Left cardiac atrium (tissue), 4 donors: ENCODE measurements at regions of chr15 and their contacts with region 1.

Region 1: GRCh38 chr15:100341662-100342560 is at the start of gene ADAMTS17:
- DNase-seq: peak; percentile 98
- ATAC-seq: peak; percentile 99
- total RNA-seq, gene ADAMTS17: 3.2 to 6.3 TPM

Region 2: GRCh38 chr15:99826157-99826780 is 515.6 kb before region 1 on chr15:
- intact Hi-C with region 1: no loop called
- DNase-seq: no peak
- ATAC-seq: no peak

Region 3: DNA sequence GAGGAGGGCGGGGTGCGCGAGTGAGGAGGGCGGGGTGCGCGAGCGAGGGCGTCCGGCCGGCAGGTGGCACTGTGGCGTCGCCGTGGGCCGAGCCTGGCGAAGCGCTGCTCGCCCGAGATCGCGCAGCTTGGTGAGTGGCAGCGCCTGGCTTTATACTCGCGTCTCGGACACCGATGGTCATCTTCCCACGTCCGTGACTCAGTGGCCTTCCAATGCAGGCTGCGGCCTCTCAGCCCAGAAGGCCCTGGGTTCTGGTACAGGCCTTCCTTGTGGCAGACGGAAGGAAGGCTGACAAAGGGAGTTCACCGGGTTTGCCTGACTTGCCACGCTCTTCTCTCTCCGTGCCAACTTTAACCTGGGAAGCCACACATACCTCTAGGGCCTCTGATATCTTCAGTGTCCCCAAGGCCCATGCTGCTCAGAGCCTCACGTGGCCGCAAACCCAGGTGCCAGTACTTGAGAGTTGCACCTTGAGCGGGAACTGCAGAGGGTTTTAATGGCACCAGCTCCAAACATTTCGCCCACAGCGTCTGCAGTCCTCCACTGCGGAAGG is 413.4 kb before region 1 on chr15:
- intact Hi-C with region 1: loop called in 1 of 2 experiments (anchors 2 kb)
- DNase-seq: peak; percentile 76
- ATAC-seq: peak; percentile 93

Region 4: DNA sequence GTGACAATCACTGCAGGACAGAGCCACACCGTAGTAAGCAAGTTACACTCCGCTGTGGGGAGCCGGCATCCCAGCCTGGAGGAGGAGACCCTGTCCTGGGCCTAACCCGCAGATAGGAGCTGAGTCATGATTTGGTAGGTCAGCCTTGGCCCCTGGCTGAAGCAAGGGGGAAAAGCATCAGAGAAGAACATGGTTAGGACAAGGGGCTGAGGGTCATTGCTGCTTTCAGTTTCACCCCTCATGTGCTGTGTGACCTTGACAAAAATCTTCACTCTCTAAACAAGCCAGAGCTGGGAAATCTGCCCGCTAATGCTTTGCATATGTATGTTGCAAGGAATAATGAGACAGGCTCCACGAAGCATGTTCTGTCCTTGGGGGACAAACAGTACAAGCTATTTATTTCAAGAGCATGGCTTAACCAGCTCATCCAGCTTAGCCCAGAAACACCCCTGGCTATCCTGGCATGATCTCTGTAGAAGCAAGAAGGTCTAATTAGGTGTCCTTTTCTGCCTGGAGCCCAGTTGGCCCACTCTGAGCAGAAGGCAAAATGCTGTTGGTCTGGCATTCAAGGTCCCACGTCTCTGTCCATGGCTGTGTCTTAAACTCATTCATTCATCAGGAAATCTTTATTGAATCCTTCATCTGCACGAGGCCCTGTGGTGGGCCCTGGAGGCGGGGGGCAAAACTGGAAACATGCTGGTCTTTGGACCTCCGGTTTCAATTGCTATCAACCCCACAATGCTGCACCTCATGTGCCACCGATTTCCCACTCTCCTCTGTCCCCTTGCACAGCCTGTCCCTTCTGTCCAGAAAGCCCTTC is 387.3 kb before region 1 on chr15:
- intact Hi-C with region 1: loop called in 1 of 2 experiments (anchors 10 kb)
- DNase-seq: no peak
- ATAC-seq: peak; percentile 29 to 38

Region 5: GRCh38 chr15:99961011-99961441 is 380.9 kb before region 1 on chr15:
- intact Hi-C with region 1: loop called (anchors 5 to 10 kb)
- DNase-seq: peak; percentile 45
- ATAC-seq: peak; percentile 41 to 63

Region 6: DNA sequence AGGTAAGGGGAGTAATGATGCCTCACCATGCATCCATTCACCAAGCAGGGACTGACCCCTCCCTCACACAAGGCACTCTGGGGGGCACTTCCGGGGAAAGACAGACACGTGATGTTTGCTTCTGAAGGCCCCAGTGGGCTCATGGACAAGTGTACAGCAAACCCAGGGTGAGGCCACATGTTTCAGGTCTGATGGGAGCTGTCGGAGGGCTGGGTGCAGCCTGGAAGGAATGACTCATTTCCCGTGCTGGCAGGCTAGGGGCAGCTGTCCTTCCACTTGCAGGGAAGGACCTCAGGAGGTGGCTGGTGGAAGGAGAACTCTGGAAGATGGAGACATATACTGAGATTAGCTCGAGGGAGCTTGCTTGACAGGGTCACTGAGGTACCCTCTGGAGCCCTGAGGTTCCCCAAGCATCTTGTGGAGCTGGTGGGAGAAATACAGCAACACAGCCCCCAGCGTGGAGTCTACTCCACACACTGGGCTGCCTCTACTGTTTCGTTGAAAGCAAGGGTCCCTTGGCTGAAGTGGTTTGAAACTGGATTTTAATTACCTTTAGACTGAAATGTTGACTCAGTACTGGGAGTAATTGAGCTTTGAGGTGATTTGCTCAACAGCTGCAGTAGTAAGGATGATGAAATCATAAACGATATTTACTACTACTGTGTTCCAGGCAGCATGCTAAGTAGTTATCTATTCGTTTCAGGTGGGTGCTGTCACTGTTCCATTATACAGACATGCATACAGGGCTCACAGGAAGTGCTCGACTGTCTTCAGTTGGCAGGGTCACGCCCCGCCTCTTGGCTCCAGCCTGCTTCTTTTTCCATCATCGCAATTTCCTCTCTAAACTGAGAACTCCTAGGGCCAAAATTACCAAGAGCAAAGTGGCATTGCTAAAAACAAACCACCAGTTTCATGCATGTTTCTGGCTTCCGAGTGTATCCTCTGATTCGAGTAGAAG is 230.5 kb before region 1 on chr15:
- intact Hi-C with region 1: loop called in 1 of 2 experiments (anchors 10 kb)
- DNase-seq: peak; percentile 84
- ATAC-seq: peak; percentile 27 to 82

Region 7: GRCh38 chr15:100207070-100207469 is 134.8 kb before region 1 on chr15:
- intact Hi-C with region 1: loop called in 1 of 2 experiments (anchors 5 kb)
- DNase-seq: no peak
- ATAC-seq: peak; percentile 76 to 87